Activated B cell treated with CpG ODN at 0.5 μM for 24 hours (primary cell): ENCODE measurements at regions of chr3 and their contacts with region 1.

Region 1: GRCh38 chr3:157201648-157202278 is 41.8 kb upstream of the CCNL1 start:
- DNase-seq: no peak
- ATAC-seq: peak; percentile 50
- H3K4me3 Mint-ChIP-seq: no peak overlapping the region
- H3K27ac Mint-ChIP-seq: no peak overlapping the region
- H3K4me1 Mint-ChIP-seq: peaks cover 4% of the 10 kb centered on the region
- H3K27me3 Mint-ChIP-seq: no peaks in the 10 kb centered on the region
- CTCF ChIP-seq: peak; percentile 47

Region 2: GRCh38 chr3:157190388-157190872 is 11.3 kb before region 1 on chr3:
- CTCF ChIA-PET with region 1: no interaction called
- POLR2A ChIA-PET with region 1: no interaction called
- intact Hi-C with region 1: no loop called
- DNase-seq: no peak
- ATAC-seq: no peak
- H3K4me3 Mint-ChIP-seq: no peak overlapping the region
- H3K27ac Mint-ChIP-seq: no peak overlapping the region
- H3K4me1 Mint-ChIP-seq: no peaks in the 10 kb centered on the region
- H3K27me3 Mint-ChIP-seq: no peaks in the 10 kb centered on the region
- CTCF ChIP-seq: no peak

Region 3: GRCh38 chr3:157239082-157239704 is 37.4 kb after region 1 on chr3:
- CTCF ChIA-PET with region 1: no interaction called
- POLR2A ChIA-PET with region 1: no interaction called
- intact Hi-C with region 1: loop called (anchors 2 kb)
- DNase-seq: peak; percentile 18
- ATAC-seq: peak; percentile 91
- H3K4me3 Mint-ChIP-seq: no peak overlapping the region
- H3K27ac Mint-ChIP-seq: no peak overlapping the region
- H3K4me1 Mint-ChIP-seq: peaks cover 2% of the 10 kb centered on the region
- H3K27me3 Mint-ChIP-seq: no peaks in the 10 kb centered on the region
- CTCF ChIP-seq: peak; percentile 60

Region 4: GRCh38 chr3:157493627-157494550 is 292.1 kb after region 1 on chr3:
- CTCF ChIA-PET with region 1: no interaction called
- POLR2A ChIA-PET with region 1: no interaction called
- intact Hi-C with region 1: loop called (anchors 5 kb)
- DNase-seq: no peak
- ATAC-seq: no peak
- H3K4me3 Mint-ChIP-seq: no peak overlapping the region
- H3K27ac Mint-ChIP-seq: no peak overlapping the region
- H3K4me1 Mint-ChIP-seq: no peaks in the 10 kb centered on the region
- H3K27me3 Mint-ChIP-seq: peaks cover 17% of the 10 kb centered on the region
- CTCF ChIP-seq: no peak

Region 5: GRCh38 chr3:157572559-157573270 is 371.0 kb after region 1 on chr3:
- CTCF ChIA-PET with region 1: no interaction called
- POLR2A ChIA-PET with region 1: no interaction called
- intact Hi-C with region 1: loop called (anchors 10 kb)
- DNase-seq: no peak
- ATAC-seq: no peak
- H3K4me3 Mint-ChIP-seq: no peak overlapping the region
- H3K27ac Mint-ChIP-seq: no peak overlapping the region
- H3K4me1 Mint-ChIP-seq: no peaks in the 10 kb centered on the region
- H3K27me3 Mint-ChIP-seq: peaks cover 14% of the 10 kb centered on the region
- CTCF ChIP-seq: no peak

Region 6: DNA sequence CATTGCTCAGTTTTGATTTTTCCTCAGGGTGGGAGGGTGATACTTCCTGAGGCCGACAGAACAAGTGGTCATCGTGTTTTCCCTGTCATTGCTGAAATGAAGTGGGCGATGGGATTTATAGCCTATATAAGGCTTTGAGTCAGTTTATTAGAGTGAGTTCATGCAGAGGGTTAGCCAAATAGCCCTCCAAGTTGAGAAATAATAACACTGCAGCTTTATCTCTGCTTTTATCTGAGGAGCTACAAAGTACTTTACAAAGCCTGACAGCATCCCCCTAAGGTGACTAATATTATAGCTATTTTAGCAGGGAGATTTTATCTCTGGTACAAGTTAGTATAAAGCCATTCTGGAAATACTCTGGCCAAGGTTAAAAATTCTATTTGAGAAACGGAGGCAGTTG is 1989.7 kb after region 1 on chr3:
- CTCF ChIA-PET with region 1: no interaction called
- POLR2A ChIA-PET with region 1: no interaction called
- intact Hi-C with region 1: no loop called
- DNase-seq: no peak
- ATAC-seq: no peak
- H3K4me3 Mint-ChIP-seq: no peak overlapping the region
- H3K27ac Mint-ChIP-seq: no peak overlapping the region
- H3K4me1 Mint-ChIP-seq: peaks cover 13% of the 10 kb centered on the region
- H3K27me3 Mint-ChIP-seq: no peaks in the 10 kb centered on the region
- CTCF ChIP-seq: no peak